ENCODE measurements at regions of chr3 and their contacts with region 1.

Region 1: DNA sequence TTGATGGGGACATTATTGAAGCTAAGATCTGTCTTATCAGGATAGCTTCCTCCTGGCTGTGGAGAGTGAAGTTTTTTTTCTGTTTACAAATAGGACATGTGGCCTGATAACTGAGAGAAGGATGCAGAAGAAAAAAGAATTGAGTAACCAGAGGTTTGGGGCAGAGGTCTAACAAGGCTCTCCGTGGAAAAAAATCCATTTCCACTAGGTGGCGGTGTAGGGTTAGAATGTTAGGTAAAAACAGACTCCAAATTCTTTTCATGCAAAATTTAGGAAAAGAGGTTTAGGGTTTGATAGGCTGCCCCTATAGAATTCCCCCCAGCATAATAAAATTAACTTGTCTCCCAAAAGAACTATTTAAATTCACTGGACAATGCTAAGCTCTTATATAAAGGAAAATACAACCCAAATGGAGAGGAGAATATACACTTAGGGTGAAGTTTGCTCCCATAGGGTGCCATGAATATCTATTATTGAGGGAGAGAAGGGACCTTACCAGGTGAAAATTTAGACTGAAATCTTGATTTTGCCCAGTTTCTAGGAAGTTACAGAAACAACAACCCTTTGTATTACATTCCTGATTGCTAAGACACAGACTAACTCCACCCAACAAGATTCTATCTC is 1560.4 kb downstream of the OTOL1 start:
- DNase-seq: peak; percentile 88
- H3K4me3 ChIP-seq: no peak overlapping the region
- H3K27ac ChIP-seq: peak overlapping the region; percentile 41
- H3K4me1 ChIP-seq: no peaks in the 10 kb centered on the region
- H3K27me3 ChIP-seq: no peaks in the 10 kb centered on the region
- CTCF ChIP-seq: peak; percentile 67

Region 2: GRCh38 chr3:162933656-162934055 is 123.3 kb before region 1 on chr3:
- CTCF ChIA-PET with region 1: no interaction called
- POLR2A ChIA-PET with region 1: no interaction called
- intact Hi-C with region 1: no loop called
- DNase-seq: no peak
- H3K4me3 ChIP-seq: no peak overlapping the region
- H3K27ac ChIP-seq: no peak overlapping the region
- H3K4me1 ChIP-seq: no peaks in the 10 kb centered on the region
- H3K27me3 ChIP-seq: no peaks in the 10 kb centered on the region
- CTCF ChIP-seq: no peak

Region 3: GRCh38 chr3:163185721-163186350 is 128.8 kb after region 1 on chr3:
- CTCF ChIA-PET with region 1: no interaction called
- POLR2A ChIA-PET with region 1: no interaction called
- intact Hi-C with region 1: loop called (anchors 5 kb)
- DNase-seq: peak; percentile 92
- H3K4me3 ChIP-seq: no peak overlapping the region
- H3K27ac ChIP-seq: peak overlapping the region; percentile 99
- H3K4me1 ChIP-seq: peaks cover 22% of the 10 kb centered on the region
- H3K27me3 ChIP-seq: no peaks in the 10 kb centered on the region
- CTCF ChIP-seq: no peak

Region 4: DNA sequence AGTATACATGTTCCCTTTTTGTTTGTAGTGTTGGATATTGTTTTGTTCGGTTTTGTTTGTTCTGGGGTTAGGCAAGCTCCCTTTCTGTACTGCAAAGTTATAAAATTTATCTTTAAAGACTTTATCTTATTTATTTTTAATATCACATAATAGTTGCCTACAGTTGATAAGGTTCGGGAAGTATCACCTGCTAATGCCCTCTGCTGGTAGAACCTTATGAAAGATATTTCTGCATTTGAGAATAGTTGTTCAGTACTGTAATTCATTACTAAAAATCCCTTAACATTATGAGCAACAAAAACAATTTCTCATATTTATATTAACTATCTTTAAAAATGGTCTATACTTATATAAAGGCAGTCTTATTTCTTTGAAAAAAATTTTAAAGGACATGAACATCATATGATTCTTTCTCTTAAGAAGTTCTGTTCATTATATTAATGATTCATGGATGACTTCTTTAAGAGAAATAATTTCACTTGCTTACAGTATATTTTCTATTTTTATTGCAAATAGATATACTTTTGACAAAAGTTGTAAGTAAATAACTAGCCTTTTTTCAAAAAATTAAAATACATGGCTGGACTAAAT is 894.5 kb after region 1 on chr3:
- CTCF ChIA-PET with region 1: no interaction called
- POLR2A ChIA-PET with region 1: no interaction called
- intact Hi-C with region 1: loop called (anchors 5 kb)
- DNase-seq: peak; percentile 33
- H3K4me3 ChIP-seq: no peak overlapping the region
- H3K27ac ChIP-seq: no peak overlapping the region
- H3K4me1 ChIP-seq: peaks cover 3% of the 10 kb centered on the region
- H3K27me3 ChIP-seq: no peaks in the 10 kb centered on the region
- CTCF ChIP-seq: peak; percentile 73

Measured in A673 (cell line).